ENCODE measurements at regions of chr9 and their contacts with region 1.

Region 1: GRCh38 chr9:128420060-128420650 is 502 bp upstream of the CERCAM start:
- DNase-seq: peak; percentile 45
- ATAC-seq: peak; percentile 89
- H3K4me3 ChIP-seq: peak overlapping the region; percentile 96
- H3K27ac ChIP-seq: peak overlapping the region; percentile 41
- H3K4me1 ChIP-seq: peaks cover 7% of the 10 kb centered on the region
- H3K27me3 ChIP-seq: peaks cover 10% of the 10 kb centered on the region
- CTCF ChIP-seq: peak; percentile 77
- POLR2A ChIP-seq: no peak
- RAD21 ChIP-seq: peak; percentile 31

Region 2: GRCh38 chr9:128370826-128371621 is 49.1 kb before region 1 on chr9 and contains the start of gene URM1:
- CTCF ChIA-PET with region 1: no interaction called
- POLR2A ChIA-PET with region 1: no interaction called
- dilution Hi-C with region 1: no loop called
- in situ Hi-C with region 1: no loop called
- intact Hi-C with region 1: loop called (anchors 2 kb)
- DNase-seq: peak; percentile 95
- ATAC-seq: peak; percentile 93
- H3K4me3 ChIP-seq: peak within 1 kb of the TSS; percentile 78
- H3K27ac ChIP-seq: peak within 1 kb of the TSS; percentile 97
- H3K4me1 ChIP-seq: peaks cover 14% of the 10 kb centered on the region
- H3K27me3 ChIP-seq: no peaks in the 10 kb centered on the region
- CTCF ChIP-seq: 0 out of 2 replicates have a peak, but pooled peaks have one; percentile 25
- POLR2A ChIP-seq: peak; percentile 89
- RAD21 ChIP-seq: no peak
- total RNA-seq, gene URM1: 20.6 and 33.2 TPM in 2 replicates

Region 3: GRCh38 chr9:128438343-128439109 is 18.4 kb after region 1 on chr9:
- CTCF ChIA-PET with region 1: interaction called, 16 read pairs
- POLR2A ChIA-PET with region 1: no interaction called
- dilution Hi-C with region 1: no loop called
- in situ Hi-C with region 1: no loop called
- intact Hi-C with region 1: no loop called
- DNase-seq: peak; percentile 67
- ATAC-seq: peak; percentile 97
- H3K4me3 ChIP-seq: no peak overlapping the region
- H3K27ac ChIP-seq: no peak overlapping the region
- H3K4me1 ChIP-seq: no peaks in the 10 kb centered on the region
- H3K27me3 ChIP-seq: no peaks in the 10 kb centered on the region
- CTCF ChIP-seq: peak; percentile 79
- POLR2A ChIP-seq: no peak
- RAD21 ChIP-seq: peak; percentile 64

Region 4: GRCh38 chr9:128455849-128456612 is 35.9 kb after region 1 on chr9 and contains the start of gene ODF2:
- CTCF ChIA-PET with region 1: no interaction called
- POLR2A ChIA-PET with region 1: interaction called, 12 read pairs
- dilution Hi-C with region 1: no loop called
- in situ Hi-C with region 1: no loop called
- intact Hi-C with region 1: no loop called
- DNase-seq: peak; percentile 92
- ATAC-seq: peak; percentile 92
- H3K4me3 ChIP-seq: peak within 1 kb of the TSS; percentile 74
- H3K27ac ChIP-seq: peak within 1 kb of the TSS; percentile 73
- H3K4me1 ChIP-seq: peaks cover 6% of the 10 kb centered on the region; the same call in 1 of the 2 replicates
- H3K27me3 ChIP-seq: no peaks in the 10 kb centered on the region
- CTCF ChIP-seq: no peak
- POLR2A ChIP-seq: peak; percentile 89
- RAD21 ChIP-seq: no peak
- total RNA-seq, gene ODF2: 46.4 and 59.2 TPM in 2 replicates

Measured in IMR-90 (cell line).